ENCODE measurements at regions of chr1 and their contacts with region 1.

Region 1: GRCh38 chr1:84936116-84936810 is 43.3 kb upstream of the LPAR3 start:
- DNase-seq: no peak
- ATAC-seq: peak; percentile 69
- H3K4me3 ChIP-seq: no peak overlapping the region
- H3K27ac ChIP-seq: no peak overlapping the region
- H3K4me1 ChIP-seq: no peaks in the 10 kb centered on the region
- H3K27me3 ChIP-seq: no peaks in the 10 kb centered on the region
- CTCF ChIP-seq: peak; percentile 83 to 86 (median 85)
- EP300 ChIP-seq: no peak
- POLR2A ChIP-seq: no peak
- RAD21 ChIP-seq: peak; percentile 89

Region 2: DNA sequence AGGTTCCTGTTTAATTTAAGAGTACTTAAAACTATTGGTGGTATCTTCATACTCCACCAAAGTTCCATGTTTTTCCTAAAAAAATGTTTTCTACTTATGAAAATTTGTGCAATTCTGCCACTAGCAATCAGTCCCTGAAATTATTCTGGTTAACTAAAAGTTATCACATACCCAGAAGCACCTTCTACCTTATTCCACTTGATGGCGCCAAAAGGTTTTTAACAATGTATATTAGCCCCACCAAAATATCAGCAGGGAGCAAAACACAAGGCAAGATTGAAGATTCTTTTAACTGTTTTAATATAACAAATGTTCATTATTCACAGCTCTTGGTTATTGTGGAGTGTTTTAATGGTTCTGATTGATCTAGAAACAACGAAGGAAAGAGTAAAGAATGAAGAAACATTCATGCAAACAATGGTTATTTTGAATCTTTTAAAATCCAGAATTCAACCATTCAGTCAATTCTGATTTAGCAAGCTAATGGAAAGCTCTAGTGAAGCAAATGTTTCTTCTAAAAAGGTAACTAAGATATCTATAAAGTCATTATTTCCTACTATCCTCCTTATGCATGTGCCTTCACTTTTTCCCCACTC is 1004.5 kb before region 1 on chr1:
- CTCF ChIA-PET with region 1: no interaction called
- POLR2A ChIA-PET with region 1: no interaction called
- RAD21 ChIA-PET with region 1: no interaction called
- SMC1A ChIA-PET with region 1: no interaction called
- in situ Hi-C with region 1: no loop called
- intact Hi-C with region 1: loop called (anchors 10 kb)
- DNase-seq: no peak
- ATAC-seq: peak; percentile 84
- H3K4me3 ChIP-seq: no peak overlapping the region
- H3K27ac ChIP-seq: no peak overlapping the region
- H3K4me1 ChIP-seq: no peaks in the 10 kb centered on the region
- H3K27me3 ChIP-seq: no peaks in the 10 kb centered on the region; a peak in 1 of 4 replicates
- CTCF ChIP-seq: peak; percentile 44 to 70 (median 59); a peak in 5 of 6 replicates
- EP300 ChIP-seq: no peak
- POLR2A ChIP-seq: no peak
- RAD21 ChIP-seq: peak; percentile 92

Region 3: DNA sequence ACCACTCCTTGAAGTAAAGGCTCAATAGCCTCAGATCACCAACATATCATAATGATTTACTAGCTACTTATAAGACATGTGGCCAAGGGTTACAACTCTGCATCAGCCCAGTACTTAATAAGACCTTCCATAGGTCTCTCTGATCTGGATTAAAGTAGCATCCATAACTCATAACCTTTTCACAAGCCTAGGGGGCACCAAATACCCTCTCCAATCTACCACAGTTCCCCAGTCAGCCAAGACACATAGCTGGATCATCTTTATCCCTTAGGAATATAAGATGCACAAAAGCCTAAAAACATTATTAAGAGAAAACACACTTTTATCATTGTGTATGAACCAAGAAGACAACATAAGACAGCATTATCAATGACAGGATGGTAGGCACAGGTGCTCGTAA is 268.1 kb before region 1 on chr1:
- CTCF ChIA-PET with region 1: interaction called, 13 read pairs
- POLR2A ChIA-PET with region 1: no interaction called
- RAD21 ChIA-PET with region 1: no interaction called
- SMC1A ChIA-PET with region 1: no interaction called
- in situ Hi-C with region 1: no loop called
- intact Hi-C with region 1: no loop called
- DNase-seq: no peak
- ATAC-seq: peak; percentile 72
- H3K4me3 ChIP-seq: no peak overlapping the region
- H3K27ac ChIP-seq: no peak overlapping the region
- H3K4me1 ChIP-seq: no peaks in the 10 kb centered on the region
- H3K27me3 ChIP-seq: no peaks in the 10 kb centered on the region
- CTCF ChIP-seq: peak in 2 of 3 experiments; percentile 38 to 41; a peak in 4 of 6 replicates
- EP300 ChIP-seq: no peak
- POLR2A ChIP-seq: no peak
- RAD21 ChIP-seq: peak; percentile 58

Region 4: GRCh38 chr1:84781946-84782771 is 154.1 kb before region 1 on chr1:
- CTCF ChIA-PET with region 1: interaction called, 20 read pairs
- POLR2A ChIA-PET with region 1: no interaction called
- RAD21 ChIA-PET with region 1: interaction called, 13 read pairs
- SMC1A ChIA-PET with region 1: interaction called, 13 read pairs
- in situ Hi-C with region 1: no loop called
- intact Hi-C with region 1: loop called (anchors 2 kb)
- DNase-seq: no peak
- ATAC-seq: peak; percentile 97
- H3K4me3 ChIP-seq: no peak overlapping the region
- H3K27ac ChIP-seq: no peak overlapping the region
- H3K4me1 ChIP-seq: no peaks in the 10 kb centered on the region
- H3K27me3 ChIP-seq: peaks cover 0 to 4% of the 10 kb centered on the region in 2 experiments; a peak in 1 of 4 replicates
- CTCF ChIP-seq: peak; percentile 76 to 89 (median 84)
- EP300 ChIP-seq: no peak
- POLR2A ChIP-seq: no peak
- RAD21 ChIP-seq: peak; percentile 57

Region 5: DNA sequence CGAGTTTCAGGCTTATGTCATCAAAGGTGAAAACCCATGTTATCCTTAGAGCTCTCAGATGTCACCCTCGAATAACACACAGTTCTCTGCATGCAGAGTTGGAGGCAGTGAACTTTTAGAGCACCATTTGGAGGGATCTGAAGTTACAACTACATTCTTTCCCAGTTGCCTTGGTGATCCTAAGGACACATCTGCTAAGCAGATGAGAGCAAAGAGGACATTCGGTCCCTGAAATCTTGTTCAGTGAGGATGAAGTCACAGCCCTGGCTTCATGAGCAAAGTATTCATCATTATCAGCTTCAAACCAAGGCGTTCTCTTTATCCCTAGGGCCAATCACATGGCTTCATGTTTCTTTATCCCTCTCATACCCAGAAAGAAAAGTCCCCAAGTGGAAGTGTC is 83.7 kb after region 1 on chr1:
- CTCF ChIA-PET with region 1: interaction called, 319 read pairs
- POLR2A ChIA-PET with region 1: no interaction called
- RAD21 ChIA-PET with region 1: no interaction called
- SMC1A ChIA-PET with region 1: interaction called, 214 read pairs
- in situ Hi-C with region 1: no loop called
- intact Hi-C with region 1: no loop called
- DNase-seq: no peak
- ATAC-seq: no peak
- H3K4me3 ChIP-seq: no peak overlapping the region
- H3K27ac ChIP-seq: no peak overlapping the region
- H3K4me1 ChIP-seq: no peaks in the 10 kb centered on the region
- H3K27me3 ChIP-seq: no peaks in the 10 kb centered on the region
- CTCF ChIP-seq: no peak
- EP300 ChIP-seq: no peak
- POLR2A ChIP-seq: no peak
- RAD21 ChIP-seq: no peak

Region 6: DNA sequence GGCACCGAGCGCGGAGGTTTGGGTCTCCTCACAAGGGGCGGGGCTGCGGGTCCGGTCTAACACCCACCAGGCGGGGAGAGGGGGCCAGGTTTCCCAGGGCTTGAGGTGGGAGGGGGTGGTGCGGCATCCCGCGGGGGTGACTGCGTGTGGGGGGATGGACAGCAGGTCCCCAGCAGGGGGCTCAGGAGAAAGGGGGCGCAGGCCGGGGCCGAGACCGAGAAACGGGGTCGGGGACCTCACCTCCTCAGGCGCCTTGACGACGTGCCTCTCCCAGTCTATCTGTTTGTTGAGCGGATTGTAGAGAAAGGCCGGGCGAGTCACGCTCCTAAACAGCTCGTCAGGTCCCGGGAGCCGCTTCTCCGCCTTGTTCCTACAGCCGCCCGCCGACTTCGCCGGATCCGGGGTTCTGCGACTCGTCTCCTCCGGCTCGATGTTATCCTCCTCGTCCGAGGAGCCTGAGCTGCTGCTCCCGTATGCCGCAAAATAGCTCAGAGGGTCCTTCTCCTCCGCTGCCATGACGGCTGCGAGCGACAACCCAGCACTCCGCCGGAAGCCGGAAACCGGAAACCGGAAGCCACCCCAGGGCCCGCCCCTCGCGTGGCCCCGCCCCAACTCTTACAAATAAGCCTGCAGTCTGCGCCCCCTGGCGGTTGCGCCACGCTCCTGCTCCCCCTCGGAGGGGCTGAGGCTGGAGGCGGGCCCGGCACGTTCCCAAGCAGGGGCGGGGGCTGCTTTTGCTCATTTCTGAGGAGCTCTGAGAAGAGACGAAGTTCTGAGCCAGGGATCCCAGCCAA is 323.1 kb after region 1 on chr1 and contains the start of gene C1orf52:
- CTCF ChIA-PET with region 1: interaction called, 13 read pairs
- POLR2A ChIA-PET with region 1: interaction called, 3 read pairs
- RAD21 ChIA-PET with region 1: interaction called, 4 read pairs
- SMC1A ChIA-PET with region 1: interaction called, 6 read pairs
- in situ Hi-C with region 1: no loop called
- intact Hi-C with region 1: no loop called
- DNase-seq: no peak
- ATAC-seq: peak; percentile 96
- H3K4me3 ChIP-seq: peak within 1 kb of the TSS; percentile 99
- H3K27ac ChIP-seq: peak within 1 kb of the TSS; percentile 69
- H3K4me1 ChIP-seq: no peaks in the 10 kb centered on the region
- H3K27me3 ChIP-seq: no peaks in the 10 kb centered on the region
- CTCF ChIP-seq: peak; percentile 90 to 98 (median 95)
- EP300 ChIP-seq: no peak
- POLR2A ChIP-seq: peak; percentile 98
- RAD21 ChIP-seq: peak; percentile 62
- polyA plus RNA-seq, gene C1orf52: 9.4 to 17.1 TPM